Posterior vena cava (tissue), 2 donors: ENCODE measurements at regions of chr13 and their contacts with region 1.

Region 1: GRCh38 chr13:61094865-61095264 is 320.8 kb downstream of the PCDH20 start:
- DNase-seq: no peak

Region 2: GRCh38 chr13:61045251-61045650 is 49.6 kb before region 1 on chr13:
- intact Hi-C with region 1: no loop called
- DNase-seq: no peak

Region 3: DNA sequence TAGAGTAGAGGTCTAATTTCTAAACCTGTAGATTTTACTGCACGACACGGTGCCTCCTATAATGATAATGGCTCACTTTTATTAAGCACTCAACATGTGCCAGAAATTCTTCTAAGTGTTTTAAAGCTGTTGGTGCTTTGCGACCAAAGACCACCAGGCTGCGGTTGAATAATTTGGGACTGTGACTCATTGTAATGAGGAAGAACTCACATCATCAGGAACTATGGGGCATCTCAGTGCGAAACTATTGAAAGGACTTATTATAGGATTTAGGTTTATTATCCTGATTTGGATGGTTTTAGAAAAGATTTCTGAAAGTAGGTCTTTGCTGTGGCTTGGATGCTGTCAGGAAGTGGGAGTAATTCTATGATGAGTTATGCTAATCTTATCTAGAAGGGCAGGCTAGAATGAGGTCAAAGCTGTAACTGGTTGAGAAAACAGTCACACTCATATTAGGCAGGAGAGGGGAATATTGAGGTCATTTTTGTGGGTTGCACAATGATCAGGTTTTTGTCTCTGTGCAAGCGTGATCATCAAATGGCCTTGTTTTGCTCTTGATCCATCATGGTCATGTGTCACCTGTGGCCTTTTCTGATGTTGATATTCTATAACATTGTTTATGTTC is 53.9 kb after region 1 on chr13:
- intact Hi-C with region 1: loop called in 1 of 2 experiments (anchors 2 kb)
- DNase-seq: no peak